CD8-positive, alpha-beta T cell (primary cell): ENCODE measurements at regions of chrX and their contacts with region 1.

Region 1: GRCh38 chrX:15335135-15336022 is at the start of gene PIGA:
- DNase-seq: peak; percentile 82 to 96 (median 89)
- ATAC-seq: peak; percentile 90
- H3K4me3 ChIP-seq: peak within 1 kb of the TSS; percentile 85 to 91
- H3K4me3 Mint-ChIP-seq: peak within 1 kb of the TSS; percentile 93
- H3K27ac ChIP-seq: peak within 1 kb of the TSS; percentile 86 to 92
- H3K27ac Mint-ChIP-seq: peak within 1 kb of the TSS; percentile 97
- H3K4me1 ChIP-seq: peaks cover 8% of the 10 kb centered on the region
- H3K4me1 Mint-ChIP-seq: peaks cover 26% of the 10 kb centered on the region
- H3K27me3 ChIP-seq: no peaks in the 10 kb centered on the region
- H3K27me3 Mint-ChIP-seq: peaks cover 6% of the 10 kb centered on the region
- CTCF ChIP-seq: no peak
- total RNA-seq, gene PIGA: 135 to 143 TPM

Region 2: GRCh38 chrX:13734278-13735172 is 1600.9 kb before region 1 on chrX and contains the starts of genes OFD1 and TRAPPC2:
- CTCF ChIA-PET with region 1: no interaction called
- POLR2A ChIA-PET with region 1: no interaction called
- intact Hi-C with region 1: loop called (anchors 10 kb)
- DNase-seq: peak; percentile 75 to 95 (median 90)
- ATAC-seq: peak; percentile 84
- H3K4me3 ChIP-seq: peak within 1 kb of the TSS; percentile 62 to 92
- H3K4me3 Mint-ChIP-seq: peak within 1 kb of the TSS; percentile 97
- H3K27ac ChIP-seq: peak within 1 kb of the TSS; percentile 93 to 99
- H3K27ac Mint-ChIP-seq: peak within 1 kb of the TSS; percentile 99
- H3K4me1 ChIP-seq: peaks cover 46% of the 10 kb centered on the region
- H3K4me1 Mint-ChIP-seq: peaks cover 54% of the 10 kb centered on the region
- H3K27me3 ChIP-seq: no peaks in the 10 kb centered on the region
- H3K27me3 Mint-ChIP-seq: no peaks in the 10 kb centered on the region
- CTCF ChIP-seq: no peak
- total RNA-seq, gene OFD1: 49.2 to 56.7 TPM
- total RNA-seq, gene TRAPPC2: 20.5 to 24.6 TPM

Region 3: DNA sequence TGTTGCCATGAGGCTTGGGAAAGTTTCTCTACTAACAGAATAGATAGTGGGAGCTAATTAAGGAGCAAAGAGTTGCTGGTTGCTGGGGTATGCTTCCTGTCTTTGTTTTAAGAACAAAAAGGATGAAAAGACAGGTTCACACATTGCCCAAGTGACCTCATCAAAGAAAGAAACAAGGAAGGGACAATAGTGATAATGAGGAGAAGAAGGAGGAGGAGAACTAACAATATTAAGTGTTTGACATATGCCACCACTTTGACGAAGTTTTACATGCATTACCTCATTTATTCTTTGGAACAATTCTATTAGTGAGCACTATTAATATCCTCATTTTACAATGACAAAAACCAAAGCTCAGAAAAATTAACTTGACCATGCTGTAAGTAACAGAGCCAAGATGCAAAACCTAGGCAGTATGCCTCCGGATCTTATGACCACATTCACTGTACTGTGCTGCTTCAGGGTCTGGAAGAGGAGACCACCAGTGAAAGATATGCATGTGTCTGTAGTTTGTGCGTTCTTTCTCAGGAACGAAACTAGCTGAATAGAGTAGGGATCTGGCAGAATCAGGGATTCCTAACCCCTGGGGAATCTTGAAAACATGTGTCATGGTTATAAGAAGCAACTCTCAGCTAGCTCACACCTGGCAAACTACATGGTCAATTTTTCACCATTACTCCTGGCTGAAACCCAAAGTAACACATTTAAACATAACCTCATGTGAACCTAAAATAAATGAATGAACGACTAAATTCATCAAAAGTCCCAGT is 378.4 kb before region 1 on chrX:
- CTCF ChIA-PET with region 1: no interaction called
- POLR2A ChIA-PET with region 1: no interaction called
- intact Hi-C with region 1: no loop called
- DNase-seq: no peak
- ATAC-seq: no peak
- H3K4me3 ChIP-seq: no peak overlapping the region
- H3K4me3 Mint-ChIP-seq: no peak overlapping the region
- H3K27ac ChIP-seq: no peak overlapping the region
- H3K27ac Mint-ChIP-seq: no peak overlapping the region
- H3K4me1 ChIP-seq: no peaks in the 10 kb centered on the region
- H3K4me1 Mint-ChIP-seq: no peaks in the 10 kb centered on the region
- H3K27me3 ChIP-seq: no peaks in the 10 kb centered on the region
- H3K27me3 Mint-ChIP-seq: peaks cover 2% of the 10 kb centered on the region
- CTCF ChIP-seq: no peak

Region 4: GRCh38 chrX:15151267-15152186 is 183.9 kb before region 1 on chrX:
- CTCF ChIA-PET with region 1: no interaction called
- POLR2A ChIA-PET with region 1: no interaction called
- intact Hi-C with region 1: loop called in 1 of 2 experiments (anchors 10 kb)
- DNase-seq: peak in 6 of 9 experiments; percentile 10 to 52 (median 24)
- ATAC-seq: peak; percentile 78
- H3K4me3 ChIP-seq: no peak overlapping the region
- H3K4me3 Mint-ChIP-seq: peak overlapping the region; percentile 39
- H3K27ac ChIP-seq: no peak overlapping the region
- H3K27ac Mint-ChIP-seq: peak overlapping the region; percentile 87
- H3K4me1 ChIP-seq: peaks cover 11% of the 10 kb centered on the region
- H3K4me1 Mint-ChIP-seq: peaks cover 23% of the 10 kb centered on the region
- H3K27me3 ChIP-seq: no peaks in the 10 kb centered on the region
- H3K27me3 Mint-ChIP-seq: no peaks in the 10 kb centered on the region
- CTCF ChIP-seq: no peak

Region 5: DNA sequence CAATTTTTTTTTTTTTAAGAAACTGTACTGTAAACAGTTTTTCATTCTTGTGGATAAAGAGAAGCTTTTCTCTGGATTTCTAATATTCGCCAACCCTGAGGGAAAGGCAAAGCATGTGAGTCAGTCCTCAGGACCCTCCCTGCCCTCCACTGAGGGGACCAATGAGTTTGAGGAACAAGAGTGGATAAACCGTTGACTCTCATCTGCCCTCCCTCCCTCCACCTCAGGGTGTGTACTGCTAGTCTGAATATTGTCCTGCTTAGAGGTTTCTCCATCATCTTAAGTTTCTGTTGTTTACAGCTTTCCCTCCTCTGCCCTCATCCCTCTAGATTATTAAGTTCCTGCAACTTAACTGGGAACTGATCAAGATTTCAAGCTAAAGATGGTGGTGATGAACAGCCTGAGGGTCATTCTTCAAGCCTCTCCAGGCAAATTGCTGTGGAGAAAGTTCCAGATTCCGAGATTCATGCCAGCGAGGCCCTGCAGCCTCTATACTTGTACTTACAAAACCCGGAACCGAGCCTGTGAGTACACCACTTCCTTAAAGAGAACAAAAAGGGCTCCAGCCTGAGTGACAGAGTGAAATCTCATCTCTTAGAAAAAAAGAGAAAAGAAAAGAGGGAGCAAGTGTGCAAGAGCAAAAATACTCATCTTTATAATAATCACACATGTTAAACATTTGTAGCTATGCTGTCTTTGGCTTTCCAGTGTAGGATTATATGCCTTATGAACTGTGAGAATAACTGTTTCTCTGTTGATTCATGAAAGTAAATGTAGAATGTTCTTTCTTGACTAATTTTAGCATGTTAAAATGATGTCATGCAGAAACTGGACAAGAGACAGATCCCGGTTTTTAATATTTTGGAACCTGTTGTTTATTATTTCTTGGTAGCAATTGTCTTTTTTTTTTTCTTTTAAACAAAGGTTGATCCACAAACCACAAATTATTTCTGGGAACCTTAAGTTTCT is 414.5 kb after region 1 on chrX:
- CTCF ChIA-PET with region 1: no interaction called
- POLR2A ChIA-PET with region 1: no interaction called
- intact Hi-C with region 1: loop called in 1 of 2 experiments (anchors 5 kb)
- DNase-seq: peak in 6 of 9 experiments; percentile 24 to 68 (median 42)
- ATAC-seq: peak; percentile 59
- H3K4me3 ChIP-seq: peak overlapping the region; percentile 13 to 17
- H3K4me3 Mint-ChIP-seq: peak overlapping the region; percentile 72
- H3K27ac ChIP-seq: peak overlapping the region; percentile 94 to 99
- H3K27ac Mint-ChIP-seq: peak overlapping the region; percentile 97
- H3K4me1 ChIP-seq: peaks cover 59% of the 10 kb centered on the region
- H3K4me1 Mint-ChIP-seq: peaks cover 77% of the 10 kb centered on the region
- H3K27me3 ChIP-seq: no peaks in the 10 kb centered on the region
- H3K27me3 Mint-ChIP-seq: no peaks in the 10 kb centered on the region
- CTCF ChIP-seq: no peak

Region 6: GRCh38 chrX:16786139-16786790 is 1450.9 kb after region 1 on chrX and contains the start of gene TXLNG:
- CTCF ChIA-PET with region 1: no interaction called
- POLR2A ChIA-PET with region 1: no interaction called
- intact Hi-C with region 1: loop called in 1 of 2 experiments (anchors 5 kb)
- DNase-seq: peak; percentile 83 to 98 (median 94)
- ATAC-seq: peak; percentile 91
- H3K4me3 ChIP-seq: peak within 1 kb of the TSS; percentile 54 to 68
- H3K4me3 Mint-ChIP-seq: peak within 1 kb of the TSS; percentile 96
- H3K27ac ChIP-seq: peak within 1 kb of the TSS; percentile 88 to 91
- H3K27ac Mint-ChIP-seq: peak within 1 kb of the TSS; percentile 87
- H3K4me1 ChIP-seq: peaks cover 4% of the 10 kb centered on the region
- H3K4me1 Mint-ChIP-seq: peaks cover 25% of the 10 kb centered on the region
- H3K27me3 ChIP-seq: no peaks in the 10 kb centered on the region
- H3K27me3 Mint-ChIP-seq: no peaks in the 10 kb centered on the region
- CTCF ChIP-seq: no peak
- total RNA-seq, gene TXLNG: 31.3 to 32.3 TPM